Activated CD4-positive, alpha-beta T cell treated with anti-CD3 and anti-CD28 coated beads for 36 hours (primary cell): ENCODE measurements at regions of chr11 and their contacts with region 1.

Region 1: DNA sequence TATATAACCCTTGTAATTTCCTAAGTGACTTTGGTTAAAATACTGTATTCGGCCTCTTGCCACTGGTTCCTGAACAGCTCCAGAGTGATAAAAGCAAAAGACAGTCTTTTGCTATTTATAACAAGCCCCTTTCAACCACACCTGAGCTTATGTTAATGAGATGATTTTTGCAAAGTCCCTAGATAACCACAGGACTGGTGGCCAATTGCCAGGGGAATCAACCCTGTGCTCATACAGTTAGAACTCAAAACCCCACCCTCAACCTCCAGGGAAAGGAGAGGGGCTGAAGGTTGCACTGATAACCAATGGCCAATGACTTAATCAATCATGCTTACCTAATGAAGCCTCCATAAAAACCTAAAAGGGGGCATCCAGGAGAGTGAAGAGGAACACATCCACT is 77.9 kb downstream of the SIK3 start:
- DNase-seq: peak; percentile 62
- ATAC-seq: peak; percentile 14
- H3K4me3 Mint-ChIP-seq: no peak overlapping the region
- H3K27ac Mint-ChIP-seq: no peak overlapping the region
- H3K4me1 Mint-ChIP-seq: peaks cover 60% of the 10 kb centered on the region
- H3K27me3 Mint-ChIP-seq: no peaks in the 10 kb centered on the region

Region 2: DNA sequence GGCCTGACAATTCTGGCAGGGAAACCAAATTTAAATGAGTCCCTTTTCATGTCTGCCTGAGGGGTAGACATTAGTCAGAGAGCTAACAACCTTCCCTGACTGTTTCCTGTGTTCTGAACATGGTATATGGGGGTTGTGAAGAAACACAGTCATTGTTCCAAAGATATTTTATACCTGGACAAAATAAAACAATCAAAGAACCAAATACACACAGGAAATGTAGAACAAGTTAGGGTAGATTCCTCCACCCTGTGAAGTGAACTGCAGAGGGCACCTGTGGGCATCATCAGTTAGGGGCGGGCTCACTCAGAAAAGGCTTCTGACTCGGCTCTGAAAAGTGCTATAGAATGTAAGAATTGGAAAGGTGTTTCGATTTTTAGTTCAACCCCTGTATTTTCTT is 1284.1 kb before region 1 on chr11:
- CTCF ChIA-PET with region 1: no interaction called
- POLR2A ChIA-PET with region 1: no interaction called
- intact Hi-C with region 1: no loop called
- DNase-seq: no peak
- ATAC-seq: no peak
- H3K4me3 Mint-ChIP-seq: no peak overlapping the region
- H3K27ac Mint-ChIP-seq: no peak overlapping the region
- H3K4me1 Mint-ChIP-seq: no peaks in the 10 kb centered on the region
- H3K27me3 Mint-ChIP-seq: no peaks in the 10 kb centered on the region

Region 3: GRCh38 chr11:117002639-117003299 is 17.5 kb before region 1 on chr11:
- CTCF ChIA-PET with region 1: interaction called, 5 read pairs
- POLR2A ChIA-PET with region 1: interaction called, 11 read pairs
- intact Hi-C with region 1: no loop called
- DNase-seq: no peak
- ATAC-seq: peak; percentile 82
- H3K4me3 Mint-ChIP-seq: no peak overlapping the region
- H3K27ac Mint-ChIP-seq: peak overlapping the region; percentile 63
- H3K4me1 Mint-ChIP-seq: peaks cover 69% of the 10 kb centered on the region
- H3K27me3 Mint-ChIP-seq: no peaks in the 10 kb centered on the region

Region 4: GRCh38 chr11:117037279-117037974 is 17.1 kb after region 1 on chr11:
- CTCF ChIA-PET with region 1: interaction called, 4 read pairs
- POLR2A ChIA-PET with region 1: interaction called, 10 read pairs
- intact Hi-C with region 1: no loop called
- DNase-seq: no peak
- ATAC-seq: peak; percentile 33
- H3K4me3 Mint-ChIP-seq: no peak overlapping the region
- H3K27ac Mint-ChIP-seq: peak overlapping the region; percentile 61
- H3K4me1 Mint-ChIP-seq: peaks cover 49% of the 10 kb centered on the region
- H3K27me3 Mint-ChIP-seq: no peaks in the 10 kb centered on the region

Region 5: GRCh38 chr11:117064275-117064674 is 44.0 kb after region 1 on chr11:
- CTCF ChIA-PET with region 1: interaction called, 3 read pairs
- POLR2A ChIA-PET with region 1: interaction called, 4 read pairs
- intact Hi-C with region 1: loop called in 1 of 2 experiments (anchors 1 kb)
- DNase-seq: no peak
- ATAC-seq: no peak
- H3K4me3 Mint-ChIP-seq: peak overlapping the region; percentile 26
- H3K27ac Mint-ChIP-seq: peak overlapping the region; percentile 28
- H3K4me1 Mint-ChIP-seq: peaks cover 63% of the 10 kb centered on the region
- H3K27me3 Mint-ChIP-seq: no peaks in the 10 kb centered on the region

Region 6: DNA sequence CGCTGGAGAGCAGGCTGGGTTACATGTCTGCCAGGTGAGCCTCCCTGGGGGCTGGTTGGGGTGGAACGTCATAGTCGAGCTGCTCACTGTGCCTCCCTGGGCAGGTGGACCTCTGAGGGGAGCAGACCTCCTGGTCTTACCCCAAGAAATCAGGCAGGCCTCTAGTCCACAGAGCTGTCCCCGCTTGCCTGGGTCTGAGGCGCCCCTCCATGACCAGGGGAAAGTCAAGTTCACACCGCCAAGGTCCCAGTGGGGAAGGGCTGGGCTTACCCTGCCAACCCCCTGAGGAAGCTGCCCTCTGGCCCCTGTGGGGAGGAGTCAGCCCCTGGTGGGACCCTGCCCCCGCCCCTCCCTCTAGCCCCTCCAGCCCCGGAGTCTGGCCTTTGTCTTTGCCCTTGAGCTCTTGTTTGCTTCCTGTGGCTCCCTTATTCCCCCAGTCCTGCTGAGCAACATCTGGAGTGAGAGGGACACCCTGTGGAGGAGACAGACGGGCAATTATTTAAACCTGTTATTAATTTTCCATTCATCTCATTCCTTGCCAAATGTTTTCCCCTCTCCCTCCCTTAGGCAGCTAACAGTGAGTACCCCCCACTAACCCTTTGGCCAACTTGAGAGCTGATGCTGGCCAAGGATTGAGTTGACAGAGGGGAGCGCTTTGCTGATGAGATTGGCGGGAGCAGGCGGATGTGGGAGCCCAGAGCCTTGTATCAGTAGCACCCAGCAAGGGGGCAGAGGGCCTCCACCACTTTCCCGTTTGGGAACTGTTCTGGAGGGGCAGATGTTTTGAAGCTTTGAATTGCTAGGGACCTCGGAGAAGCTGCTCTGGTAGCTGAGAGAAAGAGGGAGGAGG is 390.8 kb after region 1 on chr11:
- CTCF ChIA-PET with region 1: no interaction called
- POLR2A ChIA-PET with region 1: no interaction called
- intact Hi-C with region 1: no loop called
- DNase-seq: no peak
- ATAC-seq: no peak
- H3K4me3 Mint-ChIP-seq: no peak overlapping the region
- H3K27ac Mint-ChIP-seq: no peak overlapping the region
- H3K4me1 Mint-ChIP-seq: no peaks in the 10 kb centered on the region
- H3K27me3 Mint-ChIP-seq: no peaks in the 10 kb centered on the region